Motor neuron (in vitro differentiated cells): ENCODE measurements at regions of chr6 and their contacts with region 1.

Region 1: GRCh38 chr6:35731736-35732532 is 4.9 kb upstream of the ARMC12 start:
- ATAC-seq: peak; percentile 40 to 70 (median 62)
- H3K4me3 ChIP-seq: peak overlapping the region; percentile 50 to 93 (median 60)
- H3K27ac ChIP-seq: peak overlapping the region; percentile 85 to 86
- H3K4me1 ChIP-seq: peaks cover 16 to 20% of the 10 kb centered on the region in 2 donors

Region 2: DNA sequence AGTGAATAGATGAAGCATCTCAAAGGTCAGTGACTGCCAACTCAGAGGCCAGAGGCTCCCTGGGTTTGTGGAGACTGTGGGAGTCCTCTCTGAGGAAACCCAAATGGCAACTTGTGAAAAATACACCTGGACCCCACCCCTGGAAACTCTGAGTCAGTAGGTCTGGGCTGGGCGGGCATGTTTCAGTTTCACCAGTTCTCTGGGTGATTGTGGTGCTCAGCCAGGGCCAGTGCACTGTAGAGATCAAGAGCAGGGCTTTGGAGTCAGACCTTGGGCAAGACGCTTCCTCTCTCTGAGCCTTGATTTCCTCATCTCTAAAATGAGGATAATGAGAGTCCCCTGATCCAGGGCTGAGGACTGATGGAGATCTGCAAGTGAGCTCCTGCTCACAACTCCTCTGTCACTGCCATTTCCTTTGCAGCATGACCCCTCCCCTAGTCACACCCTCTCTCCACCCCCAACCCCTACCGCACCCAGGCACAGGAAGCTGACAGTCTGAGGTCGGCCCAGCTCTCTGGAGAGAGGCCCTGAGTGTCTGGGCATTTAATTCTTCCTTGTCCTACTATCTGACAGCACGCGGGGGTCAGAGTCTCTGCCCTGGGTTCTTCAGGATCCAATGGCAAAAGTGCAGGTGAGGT is 429.2 kb before region 1 on chr6:
- in situ Hi-C with region 1: loop called in 1 of 9 experiments (anchors 25 kb)
- ATAC-seq: peak; percentile 58 to 92 (median 77)
- H3K4me3 ChIP-seq: no peak overlapping the region
- H3K27ac ChIP-seq: no peak overlapping the region
- H3K4me1 ChIP-seq: peaks cover 6 to 13% of the 10 kb centered on the region in 2 donors

Region 3: DNA sequence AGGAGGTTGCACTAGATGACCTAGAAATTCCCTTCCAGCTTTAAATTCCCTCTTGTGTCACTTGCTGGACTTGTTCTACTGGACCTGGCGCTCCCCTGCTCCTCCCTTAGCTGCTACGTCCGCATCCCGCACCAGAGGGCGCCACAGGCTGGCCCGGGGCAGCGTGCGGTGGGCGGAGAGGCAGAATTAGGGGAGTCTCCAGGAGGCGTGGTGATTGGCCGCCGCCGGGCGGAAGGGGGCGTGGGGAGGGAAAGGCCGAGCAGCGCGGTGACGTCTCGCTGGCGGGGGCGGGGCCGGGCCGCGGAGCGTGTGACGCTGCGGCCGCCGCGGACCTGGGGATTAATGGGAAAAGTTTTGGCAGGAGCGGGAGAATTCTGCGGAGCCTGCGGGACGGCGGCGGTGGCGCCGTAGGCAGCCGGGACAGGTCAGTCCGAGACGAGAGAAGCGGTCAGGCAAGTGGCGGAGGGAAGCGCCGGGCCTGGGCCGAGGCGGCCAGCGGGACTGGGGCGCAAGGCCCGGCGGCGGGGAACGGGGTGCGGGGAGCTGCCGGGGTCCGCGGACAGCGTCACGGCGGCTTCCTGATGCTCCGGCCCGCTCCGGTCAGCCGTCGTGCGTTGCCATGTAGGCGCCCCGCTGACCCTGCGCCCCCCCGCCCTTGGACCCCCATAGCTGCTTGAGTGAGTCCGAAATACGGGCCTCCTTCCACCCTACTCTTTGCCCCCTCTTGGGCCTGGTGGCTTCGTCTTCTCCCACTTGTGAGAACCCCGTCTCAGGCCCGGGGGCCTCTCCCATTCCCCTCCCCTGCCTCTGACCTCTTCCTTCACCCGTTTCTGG is 389.5 kb before region 1 on chr6 and contains the start of gene PPARD:
- in situ Hi-C with region 1: loop called in 1 of 9 experiments (anchors 25 kb)
- ATAC-seq: peak; percentile 94 to 99 (median 98)
- H3K4me3 ChIP-seq: peak within 1 kb of the TSS; percentile 45 to 97 (median 69)
- H3K27ac ChIP-seq: no peak within 1 kb of the TSS
- H3K4me1 ChIP-seq: peaks cover 6 to 9% of the 10 kb centered on the region in 2 donors
- total RNA-seq, gene PPARD: 2.9 to 17.1 (median 8.1) TPM

Region 4: GRCh38 chr6:35522660-35523658 is 209.0 kb before region 1 on chr6:
- in situ Hi-C with region 1: loop called in 2 of 9 experiments (anchors 10 kb)
- ATAC-seq: peak; percentile 75 to 98 (median 84)
- H3K4me3 ChIP-seq: no peak overlapping the region
- H3K27ac ChIP-seq: no peak overlapping the region
- H3K4me1 ChIP-seq: no peaks in the 10 kb centered on the region

Region 5: GRCh38 chr6:35583893-35584688 is 147.8 kb before region 1 on chr6:
- in situ Hi-C with region 1: loop called (anchors 10 to 25 kb)
- ATAC-seq: peak; percentile 27 to 83 (median 75)
- H3K4me3 ChIP-seq: no peak overlapping the region
- H3K27ac ChIP-seq: no peak overlapping the region
- H3K4me1 ChIP-seq: no peaks in the 10 kb centered on the region